K562 (cell line): ENCODE measurements at regions of chr3 and their contacts with region 1.

Region 1: DNA sequence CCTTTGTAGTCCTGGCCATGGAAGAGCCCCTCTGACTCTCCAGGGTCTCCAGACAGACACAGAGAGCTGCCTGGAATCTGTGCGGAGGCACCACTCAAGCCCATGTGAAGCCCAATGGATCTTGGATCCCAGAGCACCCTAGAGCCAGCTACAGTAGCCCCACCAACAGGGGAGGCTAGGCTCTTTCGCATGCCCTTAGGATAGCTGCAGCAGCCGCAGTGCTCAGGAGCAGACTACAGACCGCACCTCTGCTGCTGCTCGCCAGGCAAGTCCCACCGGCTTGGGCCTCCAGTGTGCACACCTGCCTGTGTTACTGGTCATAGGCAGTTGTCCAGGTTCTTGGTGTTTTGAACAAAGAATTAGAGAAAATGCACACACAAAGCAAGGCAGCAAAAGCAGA is 131.6 kb downstream of the SPATA16 start:
- DNase-seq: no peak
- ATAC-seq: no peak; the same call in 2 of the 3 replicates
- H3K4me3 ChIP-seq: no peak overlapping the region
- H3K27ac ChIP-seq: 0 out of 3 replicates have a peak overlapping the region, but pooled peaks have one; percentile 9
- H3K4me1 ChIP-seq: peaks cover 10 to 36% of the 10 kb centered on the region in 2 experiments
- H3K27me3 ChIP-seq: no peaks in the 10 kb centered on the region
- CTCF ChIP-seq: no peak
- EP300 ChIP-seq: no peak
- POLR2A ChIP-seq: no peak
- RAD21 ChIP-seq: no peak

Region 2: GRCh38 chr3:172991424-172991996 is 17.9 kb before region 1 on chr3:
- CTCF ChIA-PET with region 1: no interaction called
- POLR2A ChIA-PET with region 1: interaction called, 3 read pairs
- in situ Hi-C with region 1: no loop called
- intact Hi-C with region 1: loop called (anchors 1 kb)
- DNase-seq: no peak
- ATAC-seq: peak; percentile 50
- H3K4me3 ChIP-seq: no peak overlapping the region
- H3K27ac ChIP-seq: no peak overlapping the region
- H3K4me1 ChIP-seq: peaks cover 0 to 11% of the 10 kb centered on the region in 2 experiments; a peak in 3 of 5 replicates
- H3K27me3 ChIP-seq: no peaks in the 10 kb centered on the region
- CTCF ChIP-seq: no peak
- EP300 ChIP-seq: peak; percentile 84
- POLR2A ChIP-seq: no peak
- RAD21 ChIP-seq: no peak

Region 3: DNA sequence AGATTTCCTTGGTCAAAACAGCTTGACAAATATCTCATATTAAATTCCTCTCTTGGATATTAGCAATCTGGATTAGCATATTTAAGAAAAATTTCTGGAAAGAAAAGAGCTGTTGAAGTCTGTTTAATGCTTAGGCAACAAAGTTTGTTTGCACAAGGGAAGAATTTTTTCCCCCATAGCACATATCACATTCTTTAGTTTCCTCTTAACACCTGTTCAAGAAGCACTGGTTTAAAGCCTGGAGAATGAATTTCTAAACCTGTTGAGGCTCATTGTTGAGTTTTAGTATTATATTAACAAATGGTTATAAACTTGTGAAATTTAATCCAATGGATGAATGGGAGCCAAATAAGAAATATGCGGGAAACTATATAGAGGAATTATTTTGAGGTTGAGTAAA is 429.6 kb after region 1 on chr3:
- CTCF ChIA-PET with region 1: no interaction called
- POLR2A ChIA-PET with region 1: no interaction called
- in situ Hi-C with region 1: no loop called
- intact Hi-C with region 1: no loop called
- DNase-seq: no peak
- ATAC-seq: no peak
- H3K4me3 ChIP-seq: no peak overlapping the region
- H3K27ac ChIP-seq: no peak overlapping the region
- H3K4me1 ChIP-seq: no peaks in the 10 kb centered on the region
- H3K27me3 ChIP-seq: no peaks in the 10 kb centered on the region
- CTCF ChIP-seq: no peak
- EP300 ChIP-seq: no peak
- POLR2A ChIP-seq: no peak
- RAD21 ChIP-seq: no peak